ENCODE measurements at regions of chr11 and their contacts with region 1.

Region 1: GRCh38 chr11:43311791-43312607 is at the start of gene API5:
- DNase-seq: peak; percentile 96
- H3K4me3 Mint-ChIP-seq: peak within 1 kb of the TSS; percentile 90
- H3K27ac Mint-ChIP-seq: peak within 1 kb of the TSS; percentile 88
- H3K4me1 Mint-ChIP-seq: peaks cover 37% of the 10 kb centered on the region
- H3K27me3 Mint-ChIP-seq: no peaks in the 10 kb centered on the region
- total RNA-seq, gene API5: 139 to 147 TPM

Region 2: GRCh38 chr11:43358801-43359421 is 46.9 kb after region 1 on chr11 and contains the start of gene TTC17:
- CTCF ChIA-PET with region 1: interaction called, 20 read pairs
- intact Hi-C with region 1: loop called (anchors 1 kb)
- DNase-seq: peak; percentile 96
- H3K4me3 Mint-ChIP-seq: peak within 1 kb of the TSS; percentile 95
- H3K27ac Mint-ChIP-seq: peak within 1 kb of the TSS; percentile 94
- H3K4me1 Mint-ChIP-seq: peaks cover 37% of the 10 kb centered on the region
- H3K27me3 Mint-ChIP-seq: no peaks in the 10 kb centered on the region
- total RNA-seq, gene TTC17: 57.1 to 64.3 TPM

Region 3: DNA sequence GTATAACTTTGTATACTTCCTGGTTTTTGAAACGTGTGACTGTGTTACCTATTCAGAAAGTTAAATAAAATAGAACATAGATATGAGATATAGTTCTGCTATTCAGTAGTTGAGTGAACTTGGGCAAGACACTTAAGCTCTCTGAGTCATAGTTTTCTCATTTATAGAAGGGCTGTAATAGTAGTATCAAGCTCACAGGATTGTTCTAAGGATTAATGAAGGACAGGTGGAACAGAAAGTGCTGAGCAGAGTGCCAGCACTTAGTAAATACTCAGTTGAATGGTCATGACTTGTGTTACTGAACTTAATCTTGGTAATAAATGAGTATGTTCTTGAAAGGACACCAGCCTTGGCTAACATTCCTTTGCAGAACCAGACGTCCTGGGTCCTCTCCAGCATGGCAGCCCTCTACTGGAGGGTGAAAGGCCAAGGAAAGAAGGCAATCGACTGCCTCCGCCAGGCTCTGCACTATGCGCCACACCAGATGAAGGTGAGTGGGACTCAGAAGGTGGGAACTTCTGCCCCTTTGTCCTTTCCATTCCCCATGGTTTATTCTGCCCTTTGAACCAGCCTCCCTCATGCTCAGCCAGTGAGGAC is 178.0 kb after region 1 on chr11:
- CTCF ChIA-PET with region 1: no interaction called
- intact Hi-C with region 1: loop called (anchors 5 kb)
- DNase-seq: no peak
- H3K4me3 Mint-ChIP-seq: no peak overlapping the region
- H3K27ac Mint-ChIP-seq: no peak overlapping the region
- H3K4me1 Mint-ChIP-seq: peaks cover 3% of the 10 kb centered on the region
- H3K27me3 Mint-ChIP-seq: no peaks in the 10 kb centered on the region

Region 4: DNA sequence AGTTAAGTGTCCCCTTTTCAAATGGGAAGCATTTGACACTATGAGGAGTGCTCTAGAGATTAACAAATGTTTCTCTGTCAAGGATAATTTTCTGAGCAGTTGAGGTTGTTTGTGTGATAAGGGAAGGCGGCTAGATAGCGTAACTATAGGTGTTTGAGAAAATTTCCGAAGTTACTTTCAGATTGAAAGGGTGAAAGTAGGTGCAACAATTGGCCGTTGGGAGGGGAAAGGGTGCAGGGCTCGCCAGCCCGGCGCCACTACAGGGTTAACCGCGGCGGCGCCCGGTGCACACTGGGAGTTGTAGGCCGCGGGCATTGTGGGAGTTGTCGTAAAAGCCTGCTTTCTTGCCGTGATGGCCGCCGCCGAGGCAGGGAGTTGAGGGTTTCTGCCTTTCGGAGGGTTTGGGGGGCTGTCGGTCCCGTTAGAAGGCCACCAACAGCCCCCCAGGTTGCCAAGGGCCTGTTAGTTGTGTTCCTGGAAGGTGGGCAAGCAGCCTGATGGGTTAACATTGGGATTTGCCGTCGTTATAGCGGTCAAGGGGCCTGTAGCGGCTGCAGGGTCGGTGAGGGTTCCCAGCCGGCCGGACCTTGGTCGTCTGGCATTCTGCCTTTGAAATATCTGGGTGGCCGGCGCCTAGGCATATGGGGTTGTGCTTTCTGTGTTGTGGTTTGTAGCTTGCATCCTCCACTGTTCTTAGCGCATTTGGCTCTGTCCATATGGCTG is 332.1 kb after region 1 on chr11:
- CTCF ChIA-PET with region 1: no interaction called
- intact Hi-C with region 1: loop called (anchors 1 kb)
- DNase-seq: peak; percentile 93
- H3K4me3 Mint-ChIP-seq: peak overlapping the region; percentile 98
- H3K27ac Mint-ChIP-seq: peak overlapping the region; percentile 92
- H3K4me1 Mint-ChIP-seq: peaks cover 23% of the 10 kb centered on the region
- H3K27me3 Mint-ChIP-seq: peaks cover 12% of the 10 kb centered on the region

Region 5: DNA sequence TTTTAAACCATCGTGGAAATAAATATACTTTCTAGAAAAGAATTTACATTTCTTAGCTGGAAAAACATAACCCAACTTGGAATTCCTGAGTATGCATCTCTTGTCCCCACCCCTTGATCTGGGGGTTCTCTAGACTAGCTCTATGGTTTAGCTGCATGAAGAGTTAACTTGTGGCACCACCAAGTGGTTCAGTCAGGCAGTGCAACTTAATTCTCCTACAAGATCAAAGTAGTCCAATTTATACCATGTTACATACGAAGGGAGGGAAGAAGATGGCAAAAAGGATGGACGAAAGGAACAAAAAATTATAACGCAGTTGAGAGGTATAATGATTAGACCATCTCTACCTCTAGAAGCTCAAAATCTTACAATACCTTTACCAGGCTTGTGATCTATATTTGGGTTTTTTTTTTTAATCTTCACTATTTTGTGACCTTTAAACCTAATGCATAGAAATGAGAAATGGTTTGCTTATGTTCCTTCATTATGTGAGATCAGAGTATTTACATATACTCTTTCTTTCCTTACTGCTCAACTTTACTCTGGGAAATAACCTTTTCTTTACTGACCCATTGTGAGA is 540.1 kb after region 1 on chr11:
- CTCF ChIA-PET with region 1: interaction called, 6 read pairs
- intact Hi-C with region 1: loop called (anchors 1 kb)
- DNase-seq: peak; percentile 87
- H3K4me3 Mint-ChIP-seq: no peak overlapping the region
- H3K27ac Mint-ChIP-seq: no peak overlapping the region
- H3K4me1 Mint-ChIP-seq: peaks cover 4% of the 10 kb centered on the region
- H3K27me3 Mint-ChIP-seq: no peaks in the 10 kb centered on the region

Region 6: GRCh38 chr11:44065841-44066731 is 754.1 kb after region 1 on chr11 and contains the start of gene ACCS:
- CTCF ChIA-PET with region 1: no interaction called
- intact Hi-C with region 1: loop called (anchors 10 kb)
- DNase-seq: peak; percentile 92
- H3K4me3 Mint-ChIP-seq: peak within 1 kb of the TSS; percentile 88
- H3K27ac Mint-ChIP-seq: peak within 1 kb of the TSS; percentile 93
- H3K4me1 Mint-ChIP-seq: peaks cover 20% of the 10 kb centered on the region
- H3K27me3 Mint-ChIP-seq: no peaks in the 10 kb centered on the region
- total RNA-seq, gene ACCS: 16.2 to 16.6 TPM